ENCODE measurements at regions of chr10 and their contacts with region 1.

Region 1: GRCh38 chr10:101782811-101783735 is at the start of gene NPM3:
- DNase-seq: peak; percentile 70 to 85 (median 73)
- H3K4me3 ChIP-seq: peak within 1 kb of the TSS; percentile 74 to 75
- H3K4me3 Mint-ChIP-seq: peak within 1 kb of the TSS; percentile 99 to 100 (median 100)
- H3K27ac ChIP-seq: peak within 1 kb of the TSS; percentile 58
- H3K27ac Mint-ChIP-seq: peak within 1 kb of the TSS; percentile 87 to 99 (median 96)
- H3K4me1 ChIP-seq: peaks cover 64% of the 10 kb centered on the region
- H3K4me1 Mint-ChIP-seq: peaks cover 38 to 76% (median 59%) of the 10 kb centered on the region in 4 donors
- H3K27me3 ChIP-seq: peaks cover 12% of the 10 kb centered on the region
- H3K27me3 Mint-ChIP-seq: peaks cover 6 to 7% of the 10 kb centered on the region in 2 donors
- total RNA-seq, gene NPM3: 11.1 to 12.4 TPM

Region 2: GRCh38 chr10:101214446-101215396 is 568.4 kb before region 1 on chr10:
- CTCF ChIA-PET with region 1: interaction called, 17 read pairs
- POLR2A ChIA-PET with region 1: no interaction called
- intact Hi-C with region 1: loop called (anchors 1 kb)
- DNase-seq: peak; percentile 63 to 75 (median 70)
- H3K4me3 ChIP-seq: peak overlapping the region in 1 of 2 donors; percentile 2
- H3K4me3 Mint-ChIP-seq: peak overlapping the region; percentile 37 to 86 (median 73)
- H3K27ac ChIP-seq: no peak overlapping the region
- H3K27ac Mint-ChIP-seq: peak overlapping the region in 3 of 7 donors; percentile 29 to 82 (median 39)
- H3K4me1 ChIP-seq: peaks cover 52% of the 10 kb centered on the region
- H3K4me1 Mint-ChIP-seq: peaks cover 16 to 49% (median 35%) of the 10 kb centered on the region in 4 donors
- H3K27me3 ChIP-seq: peaks cover 54% of the 10 kb centered on the region
- H3K27me3 Mint-ChIP-seq: peaks cover 39 to 64% of the 10 kb centered on the region in 2 donors

Region 3: DNA sequence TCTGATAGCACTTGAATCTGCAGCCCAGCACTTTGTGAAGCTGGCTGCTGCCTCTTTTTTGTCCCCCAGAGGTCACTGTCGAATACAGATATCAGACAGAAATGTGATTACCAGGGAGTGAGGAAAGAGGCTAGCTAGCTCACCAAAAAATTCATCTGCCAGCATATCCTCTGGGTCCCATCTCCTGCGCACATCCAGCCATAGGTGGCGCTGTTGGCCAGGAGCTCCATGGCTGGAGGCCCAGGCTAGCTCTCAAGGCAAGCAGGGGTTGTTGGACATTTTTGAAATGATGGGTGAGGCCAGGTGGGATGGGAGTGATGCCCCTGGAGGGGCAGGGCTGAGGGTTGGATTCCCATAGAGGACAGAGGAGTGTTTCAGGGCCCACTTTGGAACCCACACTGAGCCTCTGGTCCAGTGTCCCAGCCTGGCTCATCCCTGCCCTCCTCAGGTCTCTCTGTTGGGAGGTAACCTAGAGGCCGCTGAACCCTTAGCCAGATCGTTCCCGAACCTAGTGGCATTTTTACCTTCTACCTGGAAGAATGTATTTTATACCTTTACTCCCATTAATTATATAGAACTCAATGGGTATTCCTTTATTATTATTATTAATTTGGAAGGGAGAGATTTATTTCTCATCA is 180.2 kb before region 1 on chr10:
- CTCF ChIA-PET with region 1: interaction called, 26 read pairs
- POLR2A ChIA-PET with region 1: no interaction called
- intact Hi-C with region 1: loop called (anchors 1 kb)
- DNase-seq: peak; percentile 33 to 58 (median 41)
- H3K4me3 ChIP-seq: no peak overlapping the region
- H3K4me3 Mint-ChIP-seq: no peak overlapping the region
- H3K27ac ChIP-seq: no peak overlapping the region
- H3K27ac Mint-ChIP-seq: peak overlapping the region in 3 of 7 donors; percentile 4 to 31 (median 27)
- H3K4me1 ChIP-seq: no peaks in the 10 kb centered on the region
- H3K4me1 Mint-ChIP-seq: no peaks in the 10 kb centered on the region
- H3K27me3 ChIP-seq: no peaks in the 10 kb centered on the region
- H3K27me3 Mint-ChIP-seq: no peaks in the 10 kb centered on the region

Region 4: GRCh38 chr10:101797403-101798059 is 14.5 kb after region 1 on chr10:
- CTCF ChIA-PET with region 1: interaction called, 29 read pairs
- POLR2A ChIA-PET with region 1: interaction called, 10 read pairs
- intact Hi-C with region 1: no loop called
- DNase-seq: no peak
- H3K4me3 ChIP-seq: no peak overlapping the region
- H3K4me3 Mint-ChIP-seq: no peak overlapping the region
- H3K27ac ChIP-seq: no peak overlapping the region
- H3K27ac Mint-ChIP-seq: peak overlapping the region in 4 of 7 donors; percentile 5 to 91 (median 27)
- H3K4me1 ChIP-seq: peaks cover 38% of the 10 kb centered on the region
- H3K4me1 Mint-ChIP-seq: peaks cover 22 to 35% (median 26%) of the 10 kb centered on the region in 4 donors
- H3K27me3 ChIP-seq: no peaks in the 10 kb centered on the region
- H3K27me3 Mint-ChIP-seq: no peaks in the 10 kb centered on the region

Region 5: GRCh38 chr10:101818119-101818871 is 35.2 kb after region 1 on chr10 and contains the start of gene OGA:
- CTCF ChIA-PET with region 1: interaction called, 35 read pairs
- POLR2A ChIA-PET with region 1: interaction called, 64 read pairs
- intact Hi-C with region 1: loop called (anchors 1 kb)
- DNase-seq: peak; percentile 97 to 100 (median 99)
- H3K4me3 ChIP-seq: peak within 1 kb of the TSS; percentile 95
- H3K4me3 Mint-ChIP-seq: peak within 1 kb of the TSS; percentile 94 to 100 (median 98)
- H3K27ac ChIP-seq: peak within 1 kb of the TSS; percentile 85
- H3K27ac Mint-ChIP-seq: peak within 1 kb of the TSS; percentile 91 to 100 (median 97)
- H3K4me1 ChIP-seq: peaks cover 47% of the 10 kb centered on the region
- H3K4me1 Mint-ChIP-seq: peaks cover 31 to 59% (median 42%) of the 10 kb centered on the region in 4 donors
- H3K27me3 ChIP-seq: no peaks in the 10 kb centered on the region
- H3K27me3 Mint-ChIP-seq: no peaks in the 10 kb centered on the region
- total RNA-seq, gene OGA: 307 to 325 TPM

Region 6: DNA sequence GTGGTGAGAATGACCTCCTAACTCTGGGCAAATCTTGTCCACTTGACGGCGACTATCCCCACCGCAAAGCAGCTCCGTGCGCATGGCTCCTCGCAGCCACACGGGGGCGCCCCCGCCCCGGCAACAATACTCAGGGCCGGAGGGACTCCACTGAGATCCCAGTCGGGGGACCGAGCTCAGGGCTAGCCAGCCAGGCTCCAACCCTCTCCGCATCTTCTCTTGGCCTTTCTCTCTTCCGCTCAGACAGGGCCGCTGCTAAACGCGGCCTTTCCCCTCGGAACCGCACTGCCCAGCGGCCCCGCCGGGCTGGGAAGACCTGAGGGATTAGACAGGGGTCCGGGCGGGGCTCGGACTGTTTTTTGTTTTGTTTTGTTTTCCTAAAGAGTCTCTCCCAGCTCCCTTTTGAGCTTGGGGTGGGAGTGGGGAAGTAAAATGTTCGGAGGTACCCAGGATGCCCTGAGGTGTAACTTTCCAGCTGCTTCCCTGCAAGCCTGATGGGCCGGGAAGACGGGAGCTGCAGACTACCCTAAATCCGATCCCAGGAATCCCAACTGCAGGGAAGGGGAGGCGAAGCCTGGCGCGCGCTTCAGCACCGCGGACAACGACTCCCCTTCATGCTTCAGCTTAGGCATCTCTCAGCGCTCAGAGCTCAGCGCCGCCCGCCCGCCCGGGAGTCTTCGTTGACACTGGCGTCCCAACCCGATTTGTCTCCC is 57.8 kb after region 1 on chr10:
- CTCF ChIA-PET with region 1: interaction called, 35 read pairs
- POLR2A ChIA-PET with region 1: interaction called, 6 read pairs
- intact Hi-C with region 1: no loop called
- DNase-seq: peak; percentile 61 to 72 (median 65)
- H3K4me3 ChIP-seq: peak overlapping the region; percentile 17 to 34
- H3K4me3 Mint-ChIP-seq: peak overlapping the region; percentile 82 to 99 (median 90)
- H3K27ac ChIP-seq: no peak overlapping the region
- H3K27ac Mint-ChIP-seq: peak overlapping the region in 6 of 7 donors; percentile 30 to 92 (median 78)
- H3K4me1 ChIP-seq: peaks cover 41% of the 10 kb centered on the region
- H3K4me1 Mint-ChIP-seq: peaks cover 29 to 62% (median 42%) of the 10 kb centered on the region in 4 donors
- H3K27me3 ChIP-seq: no peaks in the 10 kb centered on the region
- H3K27me3 Mint-ChIP-seq: no peaks in the 10 kb centered on the region

Region 7: DNA sequence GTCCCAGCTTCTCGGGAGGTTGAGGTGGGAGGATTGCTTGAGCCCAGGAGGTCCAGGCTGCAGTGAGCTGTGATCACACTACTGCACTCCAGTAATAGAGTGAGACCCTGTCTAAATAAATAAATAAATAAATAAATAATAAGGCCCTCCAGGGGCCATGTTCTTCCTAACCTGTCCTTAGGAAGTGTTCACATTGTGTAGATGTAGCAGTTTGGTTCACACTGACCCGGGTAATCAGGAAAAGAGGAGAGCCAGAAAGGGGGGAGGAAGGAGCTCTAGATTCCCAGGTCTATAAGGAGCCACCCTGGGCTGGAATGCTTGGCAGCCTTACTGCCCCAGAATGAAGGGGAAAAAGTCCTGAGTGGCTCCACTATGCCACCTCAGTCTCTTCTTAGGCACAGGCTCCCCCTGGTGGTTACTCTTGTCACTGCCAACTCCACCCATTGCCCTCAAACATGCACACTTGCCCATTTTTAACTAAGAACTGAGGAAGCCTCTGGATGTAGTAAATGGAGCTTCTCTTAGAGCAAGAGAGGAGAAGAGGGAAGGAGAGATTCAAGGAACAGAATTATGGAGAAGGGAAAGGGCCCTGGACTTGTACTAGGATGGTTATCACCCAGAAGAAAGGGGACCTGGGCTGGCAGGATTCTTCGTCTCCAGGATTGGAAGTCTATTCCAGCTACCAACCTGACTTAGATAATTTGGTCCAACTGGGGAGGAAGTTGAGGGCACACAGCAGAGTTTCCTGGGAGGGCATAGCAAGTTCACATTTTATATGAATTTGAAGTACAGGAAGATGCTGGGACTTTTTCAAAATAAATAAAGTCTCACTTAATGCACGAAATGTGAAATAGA is 289.8 kb after region 1 on chr10:
- CTCF ChIA-PET with region 1: interaction called, 7 read pairs
- POLR2A ChIA-PET with region 1: no interaction called
- intact Hi-C with region 1: loop called (anchors 5 kb)
- DNase-seq: peak; percentile 67 to 76 (median 75)
- H3K4me3 ChIP-seq: no peak overlapping the region
- H3K4me3 Mint-ChIP-seq: no peak overlapping the region
- H3K27ac ChIP-seq: no peak overlapping the region
- H3K27ac Mint-ChIP-seq: no peak overlapping the region
- H3K4me1 ChIP-seq: peaks cover 14% of the 10 kb centered on the region
- H3K4me1 Mint-ChIP-seq: peaks cover 3 to 17% (median 7%) of the 10 kb centered on the region in 4 donors
- H3K27me3 ChIP-seq: no peaks in the 10 kb centered on the region
- H3K27me3 Mint-ChIP-seq: no peaks in the 10 kb centered on the region